ENCODE measurements at regions of chr7 and their contacts with region 1.

Region 1: DNA sequence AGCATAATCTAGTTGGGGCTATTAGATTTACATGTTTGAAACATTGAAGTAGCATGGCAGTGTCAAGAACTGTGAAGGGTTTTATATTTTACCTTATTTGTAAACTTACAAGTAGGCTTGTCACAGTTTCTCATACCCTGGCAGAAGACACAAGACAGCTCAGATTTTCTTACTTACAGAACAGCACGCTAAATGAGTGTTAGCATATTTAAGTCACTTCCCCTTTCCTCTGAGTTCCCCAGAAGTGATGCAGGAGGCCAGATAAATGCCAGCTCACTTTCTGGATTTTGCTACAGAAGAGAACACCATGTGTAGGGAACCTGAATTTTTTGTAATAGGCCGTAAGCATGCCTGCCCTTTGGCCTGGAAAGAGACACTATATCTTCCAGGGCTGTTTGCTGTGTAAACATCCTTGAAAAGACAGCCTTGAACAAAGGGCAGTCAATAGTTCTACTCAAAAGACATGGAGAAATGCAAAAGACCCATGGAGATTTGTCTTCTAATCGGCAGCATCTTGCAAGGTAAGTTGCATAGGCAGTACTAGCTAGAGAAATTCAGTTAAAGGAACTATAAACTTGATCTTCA is 279.1 kb downstream of the PHF14 start:
- DNase-seq: no peak
- H3K4me3 Mint-ChIP-seq: no peak overlapping the region
- H3K27ac Mint-ChIP-seq: no peak overlapping the region
- H3K4me1 Mint-ChIP-seq: peaks cover 7% of the 10 kb centered on the region
- H3K27me3 Mint-ChIP-seq: peaks cover 1% of the 10 kb centered on the region

Region 2: GRCh38 chr7:11332186-11332864 is 79.5 kb after region 1 on chr7:
- intact Hi-C with region 1: loop called (anchors 1 kb)
- DNase-seq: no peak
- H3K4me3 Mint-ChIP-seq: no peak overlapping the region
- H3K27ac Mint-ChIP-seq: no peak overlapping the region
- H3K4me1 Mint-ChIP-seq: peaks cover 18% of the 10 kb centered on the region
- H3K27me3 Mint-ChIP-seq: no peaks in the 10 kb centered on the region

Region 3: GRCh38 chr7:11369696-11370095 is 116.9 kb after region 1 on chr7:
- intact Hi-C with region 1: no loop called
- DNase-seq: no peak
- H3K4me3 Mint-ChIP-seq: no peak overlapping the region
- H3K27ac Mint-ChIP-seq: no peak overlapping the region
- H3K4me1 Mint-ChIP-seq: no peaks in the 10 kb centered on the region
- H3K27me3 Mint-ChIP-seq: no peaks in the 10 kb centered on the region